ENCODE measurements at regions of chr15 and their contacts with region 1.

Region 1: DNA sequence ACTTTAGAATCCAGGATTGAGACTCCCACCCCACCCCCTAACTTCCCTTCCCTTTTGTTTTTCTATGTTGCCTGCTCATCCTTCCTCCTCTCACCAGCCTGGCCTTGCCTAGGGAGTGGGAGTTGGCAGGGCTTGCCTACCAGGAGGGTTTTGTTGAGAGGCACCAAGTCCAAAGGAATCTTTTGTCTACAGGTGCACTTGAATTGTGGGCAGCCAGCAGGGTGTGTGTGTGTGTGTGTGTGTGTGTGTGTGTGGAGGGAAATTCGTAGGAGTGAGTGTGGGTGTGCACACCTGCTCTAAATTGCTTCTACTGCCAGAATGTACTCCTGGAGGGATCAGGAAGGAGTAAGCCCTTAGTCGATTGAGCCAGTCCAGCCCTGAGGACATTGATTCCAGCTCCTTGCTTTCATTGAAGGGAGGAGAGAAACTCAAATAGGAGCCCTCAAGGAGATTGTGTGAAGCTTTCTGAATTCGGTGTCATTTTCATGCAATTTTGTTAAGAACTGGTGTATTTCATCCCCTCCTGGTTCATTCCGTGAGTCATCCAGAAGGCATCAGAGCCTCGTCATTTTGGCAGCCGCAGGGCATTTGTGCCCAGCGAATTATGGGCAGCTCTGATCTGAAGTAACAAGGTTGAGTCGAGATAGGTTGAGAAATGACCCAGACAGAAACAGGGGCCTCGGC is 112.1 kb downstream of the SLCO3A1 start:
- DNase-seq: no peak
- H3K4me3 ChIP-seq: no peak overlapping the region
- H3K27ac ChIP-seq: no peak overlapping the region
- H3K4me1 ChIP-seq: no peaks in the 10 kb centered on the region
- H3K27me3 ChIP-seq: no peaks in the 10 kb centered on the region
- CTCF ChIP-seq: no peak

Region 2: DNA sequence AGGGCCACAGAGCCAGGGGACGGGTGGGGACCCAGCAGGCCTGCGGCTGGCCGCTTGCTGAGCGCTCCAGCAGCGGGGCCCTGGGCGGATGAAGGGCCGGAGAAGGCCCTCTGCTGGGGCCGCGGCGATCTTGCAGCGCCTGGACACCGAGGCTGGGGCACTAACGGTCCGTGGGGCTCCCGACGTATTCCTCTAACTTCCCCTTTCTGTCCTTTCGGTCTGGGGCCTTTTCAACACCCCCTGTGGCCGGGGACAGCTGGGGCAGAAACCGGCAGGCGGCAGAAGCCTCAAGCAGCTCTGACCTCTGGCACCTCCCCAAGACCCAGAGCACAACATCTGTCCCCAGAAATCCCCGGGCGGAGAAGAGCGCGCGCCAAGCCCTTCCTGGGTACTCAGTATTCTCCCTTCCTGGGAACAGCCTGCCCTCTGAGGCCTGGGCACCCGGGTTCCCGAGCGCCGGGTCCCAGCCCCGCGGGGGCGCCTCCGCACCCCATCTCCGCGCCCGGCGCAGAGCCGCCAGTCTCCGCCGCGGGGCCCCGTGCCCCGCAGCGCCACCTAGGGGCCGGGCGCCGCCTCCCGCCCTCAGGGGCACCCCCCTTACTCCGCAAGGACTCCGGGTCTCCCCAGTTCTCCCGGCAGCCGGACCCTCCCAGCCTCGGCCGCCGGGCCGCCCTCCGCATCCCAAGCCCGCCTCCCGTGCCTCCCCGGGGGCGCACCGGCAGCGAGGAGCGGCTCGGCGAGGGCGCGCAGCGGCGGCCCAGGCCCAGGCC is 112.7 kb before region 1 on chr15:
- CTCF ChIA-PET with region 1: no interaction called
- POLR2A ChIA-PET with region 1: no interaction called
- intact Hi-C with region 1: no loop called
- DNase-seq: peak; percentile 63
- H3K4me3 ChIP-seq: peak overlapping the region; percentile 71
- H3K27ac ChIP-seq: peak overlapping the region; percentile 76
- H3K4me1 ChIP-seq: peaks cover 39% of the 10 kb centered on the region
- H3K27me3 ChIP-seq: peaks cover 10% of the 10 kb centered on the region
- CTCF ChIP-seq: peak; percentile 13

Region 3: DNA sequence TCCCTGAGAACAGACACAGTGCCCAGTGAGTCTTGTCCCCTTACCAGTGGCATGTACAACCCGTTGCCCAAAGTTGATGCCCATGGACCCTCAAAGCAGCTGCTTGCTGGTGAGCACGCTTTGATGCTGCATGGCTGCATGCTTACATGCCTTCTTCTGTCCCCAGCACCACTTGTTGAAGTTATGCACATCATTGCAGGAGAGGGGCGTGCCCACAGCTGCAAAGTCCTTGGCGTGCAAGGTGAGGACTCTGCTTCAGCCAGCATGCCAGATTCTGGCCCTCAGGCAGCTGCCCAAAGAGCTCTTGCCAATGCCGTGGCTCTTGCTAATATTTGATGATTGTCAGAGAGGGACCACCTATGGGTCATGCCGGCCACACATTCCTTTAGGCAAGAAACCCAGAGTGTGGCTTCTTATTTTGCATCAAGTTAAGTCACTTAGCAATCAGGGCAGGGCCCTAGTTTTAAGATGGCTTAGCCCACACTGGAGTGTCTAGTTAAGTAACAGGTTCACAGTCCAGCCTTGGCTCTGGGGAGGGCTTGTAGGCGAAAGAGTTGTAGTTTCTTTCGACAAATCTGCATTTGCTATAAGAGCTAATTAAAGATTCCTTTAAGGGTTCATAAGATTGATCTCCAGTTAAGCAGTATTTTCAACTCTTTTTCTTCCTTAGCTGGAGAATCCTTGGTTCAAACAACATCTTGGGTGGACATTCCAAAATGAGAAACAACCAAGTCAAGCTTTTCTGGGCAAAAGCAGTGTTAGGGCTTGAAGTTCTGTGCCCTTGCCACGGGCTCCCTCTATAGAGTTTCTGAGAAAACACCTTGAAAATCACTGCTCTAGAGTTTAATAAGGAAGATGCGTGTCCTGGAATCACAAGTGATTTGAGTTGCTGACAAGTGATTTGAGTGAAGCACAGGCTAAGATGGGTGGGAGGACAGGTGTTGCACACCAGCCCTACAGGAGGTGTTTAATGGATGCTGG is 16.5 kb after region 1 on chr15:
- CTCF ChIA-PET with region 1: no interaction called
- POLR2A ChIA-PET with region 1: interaction called, 10 read pairs
- intact Hi-C with region 1: no loop called
- DNase-seq: no peak
- H3K4me3 ChIP-seq: no peak overlapping the region
- H3K27ac ChIP-seq: no peak overlapping the region
- H3K4me1 ChIP-seq: no peaks in the 10 kb centered on the region
- H3K27me3 ChIP-seq: no peaks in the 10 kb centered on the region
- CTCF ChIP-seq: no peak

Region 4: DNA sequence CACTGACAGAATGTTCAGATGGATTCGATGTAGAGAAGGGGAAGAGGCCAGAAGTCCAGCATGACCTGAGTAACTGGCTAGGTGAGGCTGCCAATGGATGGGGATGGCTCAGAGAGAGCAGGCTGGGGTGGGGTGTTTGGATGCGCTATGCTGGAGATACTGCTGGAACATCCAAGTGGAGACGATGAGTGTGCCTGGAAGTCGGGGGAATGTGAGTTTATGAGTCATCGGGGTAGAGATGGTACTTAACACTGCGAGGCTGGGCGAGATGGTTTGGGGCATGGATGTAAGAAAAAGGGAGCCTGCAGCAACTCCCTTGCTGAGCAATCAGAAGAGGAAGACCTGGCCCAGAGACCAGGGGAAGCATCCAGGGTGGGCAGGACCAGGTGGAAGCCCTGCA is 68.6 kb after region 1 on chr15:
- CTCF ChIA-PET with region 1: no interaction called
- POLR2A ChIA-PET with region 1: no interaction called
- intact Hi-C with region 1: loop called (anchors 10 kb)
- DNase-seq: no peak
- H3K4me3 ChIP-seq: no peak overlapping the region
- H3K27ac ChIP-seq: no peak overlapping the region
- H3K4me1 ChIP-seq: no peaks in the 10 kb centered on the region
- H3K27me3 ChIP-seq: no peaks in the 10 kb centered on the region
- CTCF ChIP-seq: no peak